Naive thymus-derived CD4-positive, alpha-beta T cell (primary cell): ENCODE measurements at regions of chr19 and their contacts with region 1.

Region 1: DNA sequence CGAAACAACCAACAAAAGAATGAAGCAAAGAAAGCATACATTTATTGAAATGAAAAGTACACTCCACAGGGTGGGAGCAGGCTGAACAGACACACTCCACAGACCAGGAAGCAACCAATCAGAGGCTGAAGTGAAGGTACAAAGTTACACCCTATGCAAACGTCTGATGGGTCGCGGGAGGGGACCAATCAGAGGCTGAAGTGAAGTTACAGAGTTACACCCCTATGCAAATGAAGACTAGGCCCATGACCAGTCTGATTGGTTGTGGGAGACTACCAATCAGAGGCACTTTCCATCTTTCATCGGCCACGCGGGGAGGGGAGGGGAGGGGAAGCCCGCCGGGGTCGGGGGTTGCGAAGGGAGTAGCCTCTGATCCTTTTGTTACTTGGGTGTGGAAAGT is 12.4 kb upstream of the FBL start:
- DNase-seq: peak in 2 of 9 donors; percentile 73 to 87
- ATAC-seq: no peak
- H3K4me3 ChIP-seq: no peak overlapping the region
- H3K4me3 Mint-ChIP-seq: peak overlapping the region in 1 of 10 donors; percentile 74
- H3K27ac ChIP-seq: no peak overlapping the region
- H3K27ac Mint-ChIP-seq: peak overlapping the region in 2 of 9 donors; percentile 31 to 83
- H3K4me1 ChIP-seq: no peaks in the 10 kb centered on the region
- H3K4me1 Mint-ChIP-seq: no peaks in the 10 kb centered on the region
- H3K27me3 ChIP-seq: no peaks in the 10 kb centered on the region
- H3K27me3 Mint-ChIP-seq: peaks cover 0 to 6% (median 0%) of the 10 kb centered on the region in 5 donors

Region 2: DNA sequence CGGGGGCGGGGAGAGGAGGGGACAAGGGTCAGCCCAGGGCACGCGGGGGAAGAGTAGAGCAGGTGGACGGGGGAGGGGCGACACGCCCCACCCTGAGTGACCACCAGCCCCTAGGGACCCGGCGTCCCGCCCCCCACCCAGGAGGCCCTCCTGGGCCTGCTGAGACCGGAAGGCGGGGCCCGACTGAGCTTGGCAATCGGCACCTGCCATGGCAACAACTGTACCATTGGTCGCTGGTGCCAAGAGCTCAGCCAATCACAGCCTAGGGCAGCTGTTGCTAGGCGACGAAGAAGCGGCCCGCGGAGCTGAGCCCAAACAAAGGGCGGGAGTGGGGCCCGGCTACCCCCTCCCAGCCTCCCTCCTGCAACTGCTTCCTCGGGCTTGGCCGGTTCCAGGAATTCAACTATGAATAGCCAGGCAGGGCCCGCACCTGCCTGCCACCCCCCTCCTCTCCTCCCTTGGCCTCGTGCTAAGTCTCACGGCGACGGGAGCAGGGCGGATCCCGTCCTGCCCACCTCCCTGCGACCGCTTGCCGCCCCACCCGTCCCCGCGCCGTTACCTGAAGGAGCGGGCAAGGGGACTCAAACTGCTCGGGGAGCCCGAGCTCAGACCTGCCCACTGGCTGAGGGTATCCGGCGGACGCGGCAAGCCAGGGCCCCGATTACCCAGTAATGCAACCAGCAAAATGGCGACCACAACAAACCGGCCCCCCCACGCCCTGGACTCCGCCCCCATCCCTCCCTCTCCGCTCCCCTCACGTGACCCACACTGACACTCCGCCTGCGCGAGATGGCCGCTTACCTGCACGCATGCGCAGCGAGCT is 24.9 kb before region 1 on chr19 and contains the start of gene DYRK1B:
- CTCF ChIA-PET with region 1: no interaction called
- POLR2A ChIA-PET with region 1: no interaction called
- intact Hi-C with region 1: loop called in 1 of 2 experiments (anchors 1 kb)
- DNase-seq: peak; percentile 90 to 99 (median 98)
- ATAC-seq: peak; percentile 92
- H3K4me3 ChIP-seq: peak within 1 kb of the TSS; percentile 100
- H3K4me3 Mint-ChIP-seq: peak within 1 kb of the TSS; percentile 60 to 88 (median 81)
- H3K27ac ChIP-seq: peak within 1 kb of the TSS; percentile 96
- H3K27ac Mint-ChIP-seq: peak within 1 kb of the TSS; percentile 85 to 96 (median 92)
- H3K4me1 ChIP-seq: peaks cover 17 to 23% of the 10 kb centered on the region in 2 donors
- H3K4me1 Mint-ChIP-seq: peaks cover 19 to 37% (median 27%) of the 10 kb centered on the region in 7 donors
- H3K27me3 ChIP-seq: no peaks in the 10 kb centered on the region
- H3K27me3 Mint-ChIP-seq: no peaks in the 10 kb centered on the region
- total RNA-seq, gene DYRK1B: 12.3 to 38.9 (median 23.5) TPM

Region 3: GRCh38 chr19:39941615-39942365 is 83.2 kb after region 1 on chr19:
- CTCF ChIA-PET with region 1: no interaction called
- POLR2A ChIA-PET with region 1: no interaction called
- intact Hi-C with region 1: no loop called
- DNase-seq: peak in 8 of 9 donors; percentile 33 to 85 (median 78)
- ATAC-seq: peak; percentile 91
- H3K4me3 ChIP-seq: peak overlapping the region; percentile 49
- H3K4me3 Mint-ChIP-seq: peak overlapping the region; percentile 74 to 85 (median 78)
- H3K27ac ChIP-seq: peak overlapping the region; percentile 77
- H3K27ac Mint-ChIP-seq: peak overlapping the region; percentile 72 to 93 (median 87)
- H3K4me1 ChIP-seq: peaks cover 56 to 62% of the 10 kb centered on the region in 2 donors
- H3K4me1 Mint-ChIP-seq: peaks cover 62 to 95% (median 77%) of the 10 kb centered on the region in 7 donors
- H3K27me3 ChIP-seq: no peaks in the 10 kb centered on the region
- H3K27me3 Mint-ChIP-seq: no peaks in the 10 kb centered on the region